ENCODE measurements at regions of chr15 and their contacts with region 1.

Region 1: DNA sequence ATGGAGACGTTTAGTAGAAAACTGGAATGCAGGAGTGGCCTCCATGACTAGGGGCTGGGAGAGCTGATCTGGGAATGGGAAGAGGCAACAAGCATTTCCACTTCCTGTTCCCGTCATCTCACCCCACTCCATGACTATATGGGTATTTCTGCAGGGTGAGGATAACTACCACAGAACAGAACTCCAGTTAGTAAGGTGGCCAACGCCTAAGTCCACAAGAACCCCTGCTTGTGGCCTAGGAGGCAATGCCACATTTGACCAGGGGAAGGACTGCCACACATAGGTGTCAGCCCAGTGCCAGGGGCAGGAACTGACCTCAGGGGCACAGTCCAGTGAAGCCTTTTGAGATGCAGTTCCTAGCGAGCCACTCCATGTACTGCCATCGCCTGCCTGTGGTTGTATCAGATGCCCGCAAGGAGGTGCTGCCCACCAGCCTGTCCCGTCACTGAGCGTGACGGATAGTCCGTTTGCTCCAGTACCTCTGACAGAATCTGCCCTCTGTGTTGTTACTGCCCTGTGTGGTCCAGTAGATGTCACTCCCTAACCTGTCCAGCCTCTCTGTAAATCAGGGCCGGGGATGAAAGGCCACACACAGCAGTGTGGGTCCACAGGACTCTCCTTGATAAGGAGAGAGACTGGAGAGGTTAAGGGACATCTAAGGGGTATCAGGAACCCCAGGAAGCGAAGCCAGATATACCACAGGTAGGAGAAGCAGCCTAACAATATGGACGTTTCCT is 3.5 kb upstream of the MTFMT start:
- DNase-seq: peak; percentile 59
- H3K4me3 Mint-ChIP-seq: no peak overlapping the region
- H3K27ac Mint-ChIP-seq: no peak overlapping the region
- H3K4me1 Mint-ChIP-seq: peaks cover 21% of the 10 kb centered on the region
- H3K27me3 Mint-ChIP-seq: peaks cover 24% of the 10 kb centered on the region

Region 2: GRCh38 chr15:65044724-65045481 is 11.9 kb after region 1 on chr15 and contains the start of gene SLC51B:
- CTCF ChIA-PET with region 1: interaction called, 14 read pairs
- DNase-seq: no peak
- H3K4me3 Mint-ChIP-seq: no peak within 1 kb of the TSS
- H3K27ac Mint-ChIP-seq: no peak within 1 kb of the TSS
- H3K4me1 Mint-ChIP-seq: peaks cover 9% of the 10 kb centered on the region
- H3K27me3 Mint-ChIP-seq: peaks cover 23% of the 10 kb centered on the region

Region 3: GRCh38 chr15:65077981-65078352 is 45.0 kb after region 1 on chr15:
- CTCF ChIA-PET with region 1: interaction called, 18 read pairs
- DNase-seq: peak; percentile 68
- H3K4me3 Mint-ChIP-seq: no peak overlapping the region
- H3K27ac Mint-ChIP-seq: no peak overlapping the region
- H3K4me1 Mint-ChIP-seq: peaks cover 16% of the 10 kb centered on the region
- H3K27me3 Mint-ChIP-seq: peaks cover 57% of the 10 kb centered on the region

Region 4: DNA sequence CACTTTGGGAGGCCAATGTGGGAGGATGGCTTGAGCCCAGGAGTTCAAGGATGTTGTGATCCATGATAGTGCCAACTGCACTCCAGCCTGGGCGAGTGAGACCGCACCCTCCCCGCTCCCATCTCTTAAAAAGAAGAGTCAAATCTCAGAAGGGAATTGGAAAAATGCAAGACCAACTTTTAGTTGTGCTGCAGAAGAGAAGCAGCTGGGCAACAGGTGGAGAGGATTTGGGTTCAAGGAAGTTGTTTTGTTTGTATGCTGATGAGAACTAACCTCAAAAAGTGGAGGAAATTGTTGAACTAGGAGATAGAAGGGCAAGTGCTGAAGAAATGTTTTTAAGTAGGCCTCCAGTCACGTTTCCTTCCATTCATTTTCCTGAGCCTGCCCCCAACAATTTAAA is 113.5 kb after region 1 on chr15:
- CTCF ChIA-PET with region 1: no interaction called
- DNase-seq: no peak
- H3K4me3 Mint-ChIP-seq: no peak overlapping the region
- H3K27ac Mint-ChIP-seq: peak overlapping the region; percentile 46
- H3K4me1 Mint-ChIP-seq: no peaks in the 10 kb centered on the region
- H3K27me3 Mint-ChIP-seq: no peaks in the 10 kb centered on the region

Region 5: GRCh38 chr15:65302061-65302460 is 269.1 kb after region 1 on chr15:
- CTCF ChIA-PET with region 1: interaction called, 10 read pairs
- DNase-seq: no peak
- H3K4me3 Mint-ChIP-seq: no peak overlapping the region
- H3K27ac Mint-ChIP-seq: no peak overlapping the region
- H3K4me1 Mint-ChIP-seq: peaks cover 43% of the 10 kb centered on the region
- H3K27me3 Mint-ChIP-seq: no peaks in the 10 kb centered on the region

Measured in activated naive CD4-positive, alpha-beta T cell treated with anti-CD3 and anti-CD28 coated beads, Interleukin-2, amount 10 ng/mL, durations not matched to agents 7 days and 5 days (primary cell).